Thyroid gland (tissue), 4 donors: ENCODE measurements at regions of chr13 and their contacts with region 1.

Region 1: GRCh38 chr13:40682449-40683240 is 16.2 kb upstream of the FOXO1 start:
- DNase-seq: no peak
- H3K4me3 ChIP-seq: no peak overlapping the region
- H3K27ac ChIP-seq: no peak overlapping the region
- H3K4me1 ChIP-seq: peaks cover 0 to 8% of the 10 kb centered on the region in 2 donors
- H3K27me3 ChIP-seq: no peaks in the 10 kb centered on the region
- CTCF ChIP-seq: peak in 5 of 6 experiments; percentile 25 to 79 (median 63)
- POLR2A ChIP-seq: no peak

Region 2: DNA sequence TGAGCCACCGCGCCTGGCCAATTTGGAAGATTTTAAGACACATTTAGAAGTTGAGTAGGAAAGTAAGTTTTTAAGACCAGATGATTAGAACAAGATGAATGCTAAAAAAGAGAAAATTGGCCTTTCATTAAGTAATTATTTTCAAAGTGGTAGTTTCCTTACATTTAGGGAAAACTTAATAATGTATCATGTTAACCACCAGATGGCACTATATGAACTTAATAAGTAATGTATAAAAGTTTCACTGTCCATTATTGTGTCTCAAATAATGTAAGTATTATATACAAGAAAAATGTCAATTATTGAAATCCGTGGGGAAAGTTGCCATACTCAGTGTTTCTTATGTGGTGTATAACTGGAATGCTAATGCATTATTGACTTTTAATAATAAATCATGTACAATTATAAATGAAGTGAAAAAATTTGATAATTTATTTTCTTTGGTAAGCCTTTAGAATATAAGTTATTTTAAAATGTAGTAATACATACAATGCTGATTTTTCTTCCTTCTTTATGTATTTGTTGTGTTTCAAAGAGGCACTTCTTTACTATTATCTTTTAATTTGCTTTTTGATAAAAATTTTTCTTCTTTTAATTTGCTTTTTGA is 998.0 kb before region 1 on chr13:
- intact Hi-C with region 1: loop called (anchors 10 kb)
- DNase-seq: no peak
- H3K4me3 ChIP-seq: no peak overlapping the region
- H3K27ac ChIP-seq: no peak overlapping the region
- H3K4me1 ChIP-seq: no peaks in the 10 kb centered on the region
- H3K27me3 ChIP-seq: no peaks in the 10 kb centered on the region
- CTCF ChIP-seq: peak in 4 of 6 experiments; percentile 3 to 53 (median 42)
- POLR2A ChIP-seq: no peak

Region 3: DNA sequence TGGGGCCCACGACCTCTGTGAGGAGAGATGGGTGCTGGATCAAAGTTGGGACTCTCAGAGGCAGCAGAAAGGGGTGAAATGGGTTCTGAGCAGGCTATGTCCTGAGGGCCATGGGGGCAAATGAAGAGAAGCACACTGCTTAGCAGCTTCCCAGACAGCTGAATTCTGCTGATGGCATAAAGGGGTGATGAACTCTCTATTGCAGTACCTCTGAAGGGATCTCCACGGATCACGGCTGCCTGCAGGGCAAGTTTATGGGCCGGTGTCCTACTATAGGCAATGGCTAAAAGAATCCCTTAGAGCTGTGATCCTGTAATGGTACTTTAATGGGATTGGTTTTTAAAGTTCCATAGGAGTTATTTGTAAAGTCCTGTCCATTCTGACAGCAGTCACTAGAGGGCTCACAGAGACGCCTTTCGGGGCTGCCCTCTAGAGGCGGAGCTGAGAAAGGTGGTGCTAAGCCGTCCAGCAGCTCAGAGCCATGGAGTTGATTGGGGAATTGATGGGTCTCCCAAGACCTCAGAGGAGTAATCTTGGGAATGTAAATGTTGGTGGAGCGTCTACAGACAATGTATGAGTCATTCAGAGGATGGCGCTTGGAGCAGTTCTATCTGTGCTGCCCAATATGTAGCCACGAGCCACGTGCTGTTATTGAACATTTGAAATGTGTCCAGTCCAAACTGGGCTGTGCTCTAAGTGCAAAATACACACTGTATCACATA is 739.9 kb before region 1 on chr13:
- intact Hi-C with region 1: loop called (anchors 10 kb)
- DNase-seq: peak; percentile 69 to 77
- H3K4me3 ChIP-seq: no peak overlapping the region
- H3K27ac ChIP-seq: no peak overlapping the region
- H3K4me1 ChIP-seq: peaks cover 7 to 9% of the 10 kb centered on the region in 2 donors
- H3K27me3 ChIP-seq: no peaks in the 10 kb centered on the region
- CTCF ChIP-seq: peak; percentile 74 to 93 (median 88)
- POLR2A ChIP-seq: no peak

Region 4: DNA sequence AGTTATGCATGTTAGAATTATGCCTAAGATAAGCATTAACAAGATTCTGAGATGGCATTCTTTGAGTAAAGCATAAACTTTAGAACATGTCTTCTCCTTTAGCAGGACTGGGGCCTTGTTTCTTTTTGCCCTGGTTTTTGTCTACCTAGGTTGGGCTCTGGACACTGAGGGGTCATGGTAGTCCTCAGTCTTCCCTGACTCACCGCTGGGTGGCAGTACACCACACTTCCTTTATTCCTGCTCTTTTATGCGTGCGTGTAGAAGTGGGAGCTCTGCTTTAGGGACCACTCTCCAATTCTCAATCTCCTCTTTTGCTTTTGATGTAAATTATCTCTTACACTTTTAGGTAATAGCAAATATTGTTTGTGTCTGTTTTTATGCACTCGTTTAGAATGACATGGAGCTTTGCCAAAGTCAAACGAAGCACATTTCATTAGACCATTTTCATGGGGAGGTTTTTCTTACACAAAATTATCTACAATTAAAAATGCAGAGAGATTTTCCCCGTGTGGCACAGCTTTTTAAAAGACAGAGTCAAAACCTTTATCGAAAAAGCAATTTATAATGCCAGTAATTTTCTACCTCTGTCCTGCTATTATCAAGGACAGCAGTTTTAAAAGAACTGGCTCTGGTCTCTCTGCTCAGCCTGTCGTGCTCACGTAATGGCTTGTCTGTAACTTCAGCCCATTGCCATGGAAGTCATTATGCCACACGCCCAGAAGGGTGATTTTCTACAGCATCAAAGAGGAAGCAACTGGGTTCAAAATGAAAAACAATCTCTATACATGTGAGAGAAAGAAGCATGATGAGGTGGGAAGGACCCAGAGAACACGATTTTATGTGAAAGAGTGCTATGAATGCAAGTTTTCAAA is 613.2 kb before region 1 on chr13:
- intact Hi-C with region 1: loop called (anchors 5 kb)
- DNase-seq: peak; percentile 75 to 83
- H3K4me3 ChIP-seq: no peak overlapping the region
- H3K27ac ChIP-seq: no peak overlapping the region
- H3K4me1 ChIP-seq: no peaks in the 10 kb centered on the region
- H3K27me3 ChIP-seq: no peaks in the 10 kb centered on the region
- CTCF ChIP-seq: peak; percentile 65 to 89 (median 81)
- POLR2A ChIP-seq: no peak